ENCODE measurements at regions of chr14 and their contacts with region 1.

Region 1: DNA sequence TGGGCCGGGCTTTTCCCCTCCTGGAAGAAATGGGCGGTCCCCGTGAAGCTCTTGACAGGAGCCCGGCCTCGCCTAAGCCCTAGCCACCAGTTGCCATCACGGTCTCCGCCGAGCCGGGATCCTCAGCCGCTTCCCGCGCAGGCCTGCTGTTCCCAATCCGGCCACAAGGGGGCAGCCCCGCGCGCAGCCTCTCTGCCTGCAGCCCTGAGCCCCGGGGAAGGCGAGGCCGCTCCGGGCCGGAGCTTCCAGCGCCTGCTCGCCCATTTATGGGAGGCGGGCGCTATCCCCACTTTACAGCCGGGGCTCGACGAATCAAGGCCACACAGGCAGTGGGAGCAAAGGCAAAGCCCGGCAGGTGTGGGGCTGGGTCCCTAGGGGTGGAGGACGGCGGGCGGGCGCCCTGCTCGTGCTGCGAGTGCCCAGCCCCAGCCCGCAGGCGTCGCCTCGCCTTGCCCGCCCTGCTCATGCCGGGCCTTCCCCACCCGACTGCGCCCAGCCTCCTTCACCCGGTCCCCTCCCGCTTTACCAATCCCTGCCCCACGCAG is 61.5 kb downstream of the LGMN start:
- DNase-seq: peak in 1 of 2 donors; percentile 74
- ATAC-seq: peak; percentile 78 to 85 (median 83)
- H3K4me3 ChIP-seq: no peak overlapping the region
- H3K4me3 Mint-ChIP-seq: no peak overlapping the region
- H3K27ac ChIP-seq: peak overlapping the region; percentile 12
- H3K27ac Mint-ChIP-seq: peak overlapping the region; percentile 69 to 73
- H3K4me1 ChIP-seq: peaks cover under 1% of the 10 kb centered on the region
- H3K4me1 Mint-ChIP-seq: peaks cover 4 to 16% of the 10 kb centered on the region in 2 donors
- H3K27me3 ChIP-seq: no peaks in the 10 kb centered on the region
- H3K27me3 Mint-ChIP-seq: no peaks in the 10 kb centered on the region
- CTCF ChIP-seq: peak; percentile 96

Region 2: DNA sequence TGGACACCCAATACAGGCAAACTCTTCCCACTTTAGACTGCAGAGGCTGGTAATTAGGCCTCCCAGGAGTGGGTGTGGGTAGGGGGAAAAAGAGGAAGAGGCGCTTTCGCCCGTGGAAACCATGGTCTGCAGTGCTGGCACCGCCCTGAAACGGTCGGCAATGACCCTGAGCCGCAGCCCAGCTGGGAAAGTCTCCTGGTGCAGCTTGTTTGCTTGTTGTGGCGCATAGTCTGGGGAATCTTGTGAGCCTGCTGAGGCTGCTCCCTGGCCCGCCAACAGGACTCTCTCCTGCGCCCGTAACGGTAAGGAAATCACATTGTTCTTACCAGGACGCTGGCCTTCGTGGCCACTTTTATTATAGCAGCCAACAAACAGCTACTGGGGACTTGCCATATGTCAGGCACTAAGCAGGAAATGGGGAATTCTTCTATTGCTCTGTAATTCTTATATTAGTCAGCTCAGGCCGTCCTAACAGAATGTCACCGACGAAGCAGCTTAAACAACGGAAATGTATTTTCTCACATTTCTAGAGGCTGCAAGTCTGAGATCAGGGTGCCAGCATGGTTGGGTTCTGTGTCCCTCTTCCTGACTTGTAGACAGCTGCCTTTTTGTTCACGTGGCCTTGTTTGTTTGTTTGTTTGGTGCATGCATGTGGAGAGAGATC is 225.9 kb before region 1 on chr14:
- intact Hi-C with region 1: loop called (anchors 10 kb)
- DNase-seq: peak in 1 of 2 donors; percentile 63
- ATAC-seq: peak; percentile 86 to 90 (median 89)
- H3K4me3 ChIP-seq: no peak overlapping the region
- H3K4me3 Mint-ChIP-seq: peak overlapping the region; percentile 41
- H3K27ac ChIP-seq: peak overlapping the region; percentile 70
- H3K27ac Mint-ChIP-seq: peak overlapping the region; percentile 85 to 91
- H3K4me1 ChIP-seq: peaks cover 43% of the 10 kb centered on the region
- H3K4me1 Mint-ChIP-seq: peaks cover 21 to 47% of the 10 kb centered on the region in 2 donors
- H3K27me3 ChIP-seq: no peaks in the 10 kb centered on the region
- H3K27me3 Mint-ChIP-seq: no peaks in the 10 kb centered on the region
- CTCF ChIP-seq: no peak

Region 3: DNA sequence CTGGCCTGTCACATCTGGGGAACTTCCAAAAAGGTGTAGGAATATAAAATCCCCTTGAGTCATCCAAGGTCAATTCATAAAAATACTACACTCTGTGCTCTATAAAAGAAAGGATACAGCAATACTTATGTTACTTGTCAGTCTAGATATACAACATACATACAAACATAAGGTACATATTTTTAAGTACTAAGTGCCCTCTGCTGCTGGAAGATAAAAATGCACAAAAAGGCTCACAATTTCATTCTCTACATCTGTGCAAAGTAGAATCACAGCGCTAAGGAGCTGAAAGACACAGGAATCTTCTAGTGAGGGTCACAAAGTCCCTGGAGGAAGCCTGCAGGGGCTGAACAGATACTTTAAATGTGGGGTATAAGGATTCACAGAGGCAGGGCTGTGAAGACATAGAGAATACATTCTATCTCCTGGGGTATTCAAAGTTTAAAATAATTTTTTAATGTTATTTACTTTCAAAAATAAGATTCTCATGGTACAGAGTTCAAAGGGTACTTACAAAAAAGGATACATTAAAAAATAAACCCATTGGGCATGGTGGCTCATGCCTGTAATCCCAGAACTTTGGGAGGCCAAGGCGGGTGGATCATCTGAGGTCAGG is 97.0 kb after region 1 on chr14:
- intact Hi-C with region 1: loop called (anchors 2 kb)
- DNase-seq: peak in 1 of 2 donors; percentile 67
- ATAC-seq: peak; percentile 77 to 87 (median 82)
- H3K4me3 ChIP-seq: no peak overlapping the region
- H3K4me3 Mint-ChIP-seq: no peak overlapping the region
- H3K27ac ChIP-seq: no peak overlapping the region
- H3K27ac Mint-ChIP-seq: no peak overlapping the region
- H3K4me1 ChIP-seq: no peaks in the 10 kb centered on the region
- H3K4me1 Mint-ChIP-seq: no peaks in the 10 kb centered on the region
- H3K27me3 ChIP-seq: no peaks in the 10 kb centered on the region
- H3K27me3 Mint-ChIP-seq: no peaks in the 10 kb centered on the region
- CTCF ChIP-seq: peak; percentile 58

Region 4: DNA sequence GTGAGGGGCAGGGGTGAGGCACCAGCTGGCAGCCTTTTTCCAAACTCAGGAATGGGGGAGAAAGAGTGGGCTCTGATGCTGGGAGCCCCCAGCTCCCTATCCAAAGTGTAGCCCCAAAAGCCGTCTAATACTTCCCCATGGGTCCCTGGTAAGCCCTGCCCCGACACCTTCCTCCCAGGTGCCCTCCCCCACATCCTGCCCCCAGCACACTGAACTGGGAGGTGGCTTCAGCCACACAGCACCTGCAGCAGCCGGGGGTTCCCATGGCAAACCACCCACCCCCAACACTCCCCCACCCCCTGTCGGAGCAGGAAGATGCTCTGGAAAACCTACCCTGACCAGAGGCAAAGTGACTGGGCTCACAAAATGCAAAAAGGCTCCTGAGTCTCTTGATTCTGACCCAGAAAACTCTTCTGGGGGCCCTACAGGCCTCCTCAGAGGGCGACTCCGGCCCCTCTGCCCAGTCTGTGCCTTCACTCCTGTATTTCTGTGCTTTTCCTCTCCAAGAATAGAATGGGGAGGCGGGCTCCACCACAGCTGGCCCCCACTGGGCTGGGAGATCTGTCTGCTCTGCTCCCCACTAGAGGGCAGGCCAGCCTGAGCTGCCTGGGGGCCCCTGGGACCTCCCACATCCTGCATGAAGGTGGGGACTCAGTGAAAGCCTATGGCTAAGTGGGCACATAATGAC is 347.2 kb after region 1 on chr14:
- intact Hi-C with region 1: no loop called
- DNase-seq: peak; percentile 53 to 69
- ATAC-seq: peak; percentile 58 to 70 (median 61)
- H3K4me3 ChIP-seq: no peak overlapping the region
- H3K4me3 Mint-ChIP-seq: peak overlapping the region; percentile 60
- H3K27ac ChIP-seq: peak overlapping the region; percentile 91
- H3K27ac Mint-ChIP-seq: peak overlapping the region; percentile 65 to 84
- H3K4me1 ChIP-seq: peaks cover 55% of the 10 kb centered on the region
- H3K4me1 Mint-ChIP-seq: peaks cover 35 to 69% of the 10 kb centered on the region in 2 donors
- H3K27me3 ChIP-seq: no peaks in the 10 kb centered on the region
- H3K27me3 Mint-ChIP-seq: no peaks in the 10 kb centered on the region
- CTCF ChIP-seq: peak; percentile 78

Measured in natural killer cell (primary cell).